Activated CD4-positive, alpha-beta memory T cell treated with anti-CD3 and anti-CD28 coated beads for 36 hours (primary cell): ENCODE measurements at regions of chr17 and their contacts with region 1.

Region 1: DNA sequence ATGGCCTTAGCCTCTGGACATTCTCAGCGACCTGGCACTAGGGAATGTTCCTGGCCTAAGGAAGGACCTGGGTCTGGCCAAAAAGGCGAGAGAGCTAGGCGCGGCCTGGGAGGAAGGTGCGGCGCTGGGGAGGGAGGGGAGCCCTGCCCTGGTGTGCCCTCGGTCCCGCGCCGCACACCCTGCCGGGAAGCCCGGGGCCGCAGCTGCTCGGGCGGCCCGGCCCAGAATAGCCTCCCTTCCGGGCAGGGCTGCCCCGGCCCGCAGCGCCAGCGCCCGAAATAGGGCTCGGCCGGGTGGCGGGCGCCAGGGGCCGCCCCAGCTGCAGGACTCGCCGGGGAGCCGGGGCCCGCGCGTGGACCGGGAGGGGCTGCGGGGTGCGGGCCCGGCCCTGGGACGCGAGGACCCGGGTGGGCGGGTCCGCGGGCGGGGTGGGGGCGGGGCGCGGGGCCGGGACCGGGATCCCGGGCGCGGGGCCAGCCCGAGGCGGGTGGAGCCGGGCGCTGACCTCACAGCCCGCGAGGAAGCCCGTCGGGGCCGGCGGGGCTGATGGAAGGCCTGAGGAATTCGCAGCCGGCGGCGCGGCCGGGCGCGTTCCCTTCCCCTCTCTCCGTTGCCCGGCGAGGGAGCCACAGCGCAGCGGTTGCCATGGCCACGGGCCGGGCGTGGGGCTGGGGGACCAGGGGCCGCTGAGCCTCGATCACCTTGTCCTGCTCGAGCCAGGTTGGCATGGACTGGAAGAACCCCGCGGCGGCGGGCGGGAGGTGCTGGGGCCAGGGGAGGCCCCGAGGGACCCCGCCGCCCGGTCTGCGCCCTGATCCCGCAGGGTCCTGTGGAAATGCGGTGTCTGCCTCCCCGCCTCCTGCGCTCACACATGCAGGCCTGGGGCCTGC is 18.1 kb downstream of the SOCS3 start:
- DNase-seq: no peak
- H3K4me3 Mint-ChIP-seq: no peak overlapping the region
- H3K27ac Mint-ChIP-seq: no peak overlapping the region
- H3K4me1 Mint-ChIP-seq: peaks cover 74% of the 10 kb centered on the region
- H3K27me3 Mint-ChIP-seq: peaks cover 1% of the 10 kb centered on the region

Region 2: GRCh38 chr17:78289802-78290363 is 51.9 kb before region 1 on chr17:
- CTCF ChIA-PET with region 1: interaction called, 7 read pairs
- POLR2A ChIA-PET with region 1: no interaction called
- intact Hi-C with region 1: loop called (anchors 5 kb)
- DNase-seq: peak; percentile 84
- H3K4me3 Mint-ChIP-seq: no peak overlapping the region
- H3K27ac Mint-ChIP-seq: no peak overlapping the region
- H3K4me1 Mint-ChIP-seq: peaks cover 2% of the 10 kb centered on the region
- H3K27me3 Mint-ChIP-seq: no peaks in the 10 kb centered on the region

Region 3: DNA sequence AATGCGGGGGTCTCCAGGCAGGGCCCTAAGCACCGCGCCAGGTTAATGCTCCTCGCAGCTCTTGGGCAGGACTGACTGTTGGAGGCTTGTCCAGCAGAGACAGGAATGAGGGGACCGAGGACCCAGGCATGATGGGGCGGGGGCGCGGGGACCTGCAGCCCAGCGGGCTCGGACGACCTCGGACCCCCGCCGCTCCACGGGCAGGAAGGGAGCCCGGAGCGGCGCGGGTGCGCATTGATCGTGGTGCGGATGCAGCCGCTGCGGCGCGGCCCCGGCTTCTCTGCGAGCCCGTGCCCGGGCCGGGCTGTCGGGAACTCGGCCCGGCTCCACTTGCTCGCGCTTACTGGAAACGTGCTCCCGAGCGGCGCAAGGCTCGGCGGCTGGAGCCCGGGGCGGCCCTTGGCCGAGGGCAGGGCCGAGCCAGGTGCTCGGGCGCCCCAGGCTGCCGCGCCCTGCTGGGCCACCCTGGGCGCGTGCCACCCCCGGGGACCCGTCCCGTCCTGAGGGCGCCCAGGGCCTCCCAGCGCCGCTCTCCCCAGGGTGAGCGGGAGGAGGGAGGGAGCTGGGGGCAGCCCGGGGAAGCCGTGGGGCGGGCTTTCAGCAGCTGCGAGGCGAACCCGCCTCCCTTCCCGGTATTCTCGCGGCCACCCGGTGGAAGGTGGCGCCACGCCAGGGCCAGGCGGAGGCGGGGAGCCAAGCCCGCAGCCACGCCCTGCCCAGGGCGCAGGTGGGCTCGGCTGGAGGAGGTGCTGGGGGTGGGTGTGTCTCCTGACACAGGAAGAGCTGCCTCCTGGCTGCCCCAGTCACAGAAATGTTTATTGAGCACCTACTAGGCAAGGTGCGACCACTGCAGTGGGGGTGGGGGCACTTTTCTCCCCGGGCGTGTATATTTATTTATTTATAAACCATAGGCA is 27.8 kb before region 1 on chr17:
- CTCF ChIA-PET with region 1: interaction called, 7 read pairs
- POLR2A ChIA-PET with region 1: interaction called, 4 read pairs
- intact Hi-C with region 1: loop called (anchors 2 kb)
- DNase-seq: peak; percentile 86
- H3K4me3 Mint-ChIP-seq: peak overlapping the region; percentile 59
- H3K27ac Mint-ChIP-seq: peak overlapping the region; percentile 87
- H3K4me1 Mint-ChIP-seq: peaks cover 49% of the 10 kb centered on the region
- H3K27me3 Mint-ChIP-seq: peaks cover 1% of the 10 kb centered on the region

Region 4: GRCh38 chr17:78378225-78379130 is 36.7 kb after region 1 on chr17 and contains the start of gene PGS1:
- CTCF ChIA-PET with region 1: no interaction called
- POLR2A ChIA-PET with region 1: interaction called, 10 read pairs
- intact Hi-C with region 1: no loop called
- DNase-seq: peak; percentile 89
- H3K4me3 Mint-ChIP-seq: peak within 1 kb of the TSS; percentile 99
- H3K27ac Mint-ChIP-seq: peak within 1 kb of the TSS; percentile 99
- H3K4me1 Mint-ChIP-seq: peaks cover 62% of the 10 kb centered on the region
- H3K27me3 Mint-ChIP-seq: peaks cover 2% of the 10 kb centered on the region
- total RNA-seq, gene PGS1: 75.8 to 78.1 TPM